ENCODE measurements at regions of chr13 and their contacts with region 1.

Region 1: GRCh38 chr13:50529154-50529882 is 314.2 kb downstream of the DLEU7 start:
- DNase-seq: peak; percentile 87 to 95 (median 91)
- ATAC-seq: peak; percentile 86 to 96 (median 94)
- H3K4me3 ChIP-seq: peak overlapping the region in 10 of 12 donors; percentile 6 to 41 (median 26)
- H3K27ac ChIP-seq: peak overlapping the region; percentile 50 to 85 (median 76)
- H3K4me1 ChIP-seq: peaks cover 5 to 51% (median 28%) of the 10 kb centered on the region in 12 donors
- H3K27me3 ChIP-seq: no peaks in the 10 kb centered on the region
- CTCF ChIP-seq: no peak
- POLR2A ChIP-seq: no peak

Region 2: GRCh38 chr13:49996951-49997895 is 532.1 kb before region 1 on chr13 and contains the start of gene TRIM13:
- intact Hi-C with region 1: loop called in 5 of 10 experiments (anchors 5 kb)
- DNase-seq: peak; percentile 89 to 95 (median 93)
- ATAC-seq: peak; percentile 89 to 94 (median 91)
- H3K4me3 ChIP-seq: peak within 1 kb of the TSS; percentile 60 to 91 (median 85)
- H3K27ac ChIP-seq: peak within 1 kb of the TSS; percentile 96 to 100 (median 98)
- H3K4me1 ChIP-seq: peaks cover 9 to 58% (median 39%) of the 10 kb centered on the region in 12 donors
- H3K27me3 ChIP-seq: no peaks in the 10 kb centered on the region
- CTCF ChIP-seq: peak; percentile 42 to 95 (median 76)
- POLR2A ChIP-seq: peak in 1 of 2 donors; percentile 69
- total RNA-seq, gene TRIM13: 14.6 to 26.9 (median 19.1) TPM

Region 3: GRCh38 chr13:50152655-50153309 is 376.5 kb before region 1 on chr13:
- intact Hi-C with region 1: loop called in 1 of 10 experiments (anchors 10 kb)
- DNase-seq: no peak
- ATAC-seq: no peak
- H3K4me3 ChIP-seq: peak overlapping the region in 8 of 12 donors; percentile 1 to 42 (median 26)
- H3K27ac ChIP-seq: peak overlapping the region in 1 of 12 donors; percentile 17
- H3K4me1 ChIP-seq: peaks cover 0 to 26% (median 11%) of the 10 kb centered on the region in 12 donors
- H3K27me3 ChIP-seq: no peaks in the 10 kb centered on the region
- CTCF ChIP-seq: no peak
- POLR2A ChIP-seq: no peak

Region 4: GRCh38 chr13:50376895-50377575 is 152.3 kb before region 1 on chr13:
- intact Hi-C with region 1: loop called in 4 of 10 experiments (anchors 2 to 10 kb)
- DNase-seq: peak in 1 of 5 donors; percentile 30
- ATAC-seq: peak in 2 of 4 donors; percentile 53 to 70
- H3K4me3 ChIP-seq: no peak overlapping the region
- H3K27ac ChIP-seq: no peak overlapping the region
- H3K4me1 ChIP-seq: no peaks in the 10 kb centered on the region
- H3K27me3 ChIP-seq: no peaks in the 10 kb centered on the region
- CTCF ChIP-seq: peak in 8 of 12 donors; percentile 24 to 51 (median 33)
- POLR2A ChIP-seq: no peak

Region 5: GRCh38 chr13:50421473-50422130 is 107.7 kb before region 1 on chr13:
- intact Hi-C with region 1: loop called in 2 of 10 experiments (anchors 10 kb)
- DNase-seq: no peak
- ATAC-seq: peak in 1 of 4 donors; percentile 26
- H3K4me3 ChIP-seq: no peak overlapping the region
- H3K27ac ChIP-seq: peak overlapping the region in 9 of 12 donors; percentile 13 to 77 (median 47)
- H3K4me1 ChIP-seq: peaks cover 0 to 60% (median 46%) of the 10 kb centered on the region in 12 donors
- H3K27me3 ChIP-seq: no peaks in the 10 kb centered on the region
- CTCF ChIP-seq: no peak
- POLR2A ChIP-seq: no peak

Measured in heart left ventricle (tissue), 16 donors.